ENCODE measurements at regions of chr21 and their contacts with region 1.

Region 1: DNA sequence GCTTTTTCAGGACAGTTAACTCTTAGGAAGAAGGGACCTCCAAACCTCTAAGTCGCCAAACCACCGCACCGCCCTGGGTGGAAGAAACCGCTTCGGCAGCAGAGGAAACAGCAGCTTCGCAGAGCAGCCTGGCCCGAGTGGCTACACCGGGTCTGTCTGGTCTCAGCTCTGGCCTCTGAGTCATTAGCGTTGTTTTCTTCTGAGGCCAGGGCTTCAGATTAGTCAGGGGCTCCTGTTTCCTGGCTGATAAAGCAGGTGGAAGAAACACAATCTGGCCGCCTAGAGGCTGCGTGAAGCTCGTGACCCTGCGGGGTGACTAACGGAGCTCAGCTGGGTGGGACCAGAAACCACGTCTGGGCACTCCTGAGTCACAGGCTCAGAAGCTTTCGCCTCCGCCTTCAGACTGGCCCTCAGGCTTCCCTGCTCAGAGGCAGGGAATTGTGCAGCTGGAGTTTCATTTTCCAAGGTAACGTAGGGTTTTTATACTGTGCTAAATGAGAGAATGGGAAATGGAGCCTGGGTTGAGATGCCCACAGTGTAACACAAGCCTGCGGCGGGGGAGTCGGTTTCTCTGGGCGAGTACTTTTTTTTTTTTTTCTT is 44.9 kb downstream of the CHAF1B start:
- DNase-seq: peak; percentile 66 to 93 (median 80)
- ATAC-seq: peak; percentile 88 to 95 (median 94)
- H3K4me3 ChIP-seq: peak overlapping the region in 11 of 12 donors; percentile 9 to 53 (median 35)
- H3K27ac ChIP-seq: peak overlapping the region; percentile 20 to 88 (median 74)
- H3K4me1 ChIP-seq: peaks cover 0 to 34% (median 5%) of the 10 kb centered on the region in 12 donors
- H3K27me3 ChIP-seq: peaks cover 0 to 6% (median 0%) of the 10 kb centered on the region in 9 donors
- CTCF ChIP-seq: peak in 3 of 12 donors; percentile 3 to 10 (median 8)
- POLR2A ChIP-seq: peak in 1 of 2 donors; percentile 71

Region 2: DNA sequence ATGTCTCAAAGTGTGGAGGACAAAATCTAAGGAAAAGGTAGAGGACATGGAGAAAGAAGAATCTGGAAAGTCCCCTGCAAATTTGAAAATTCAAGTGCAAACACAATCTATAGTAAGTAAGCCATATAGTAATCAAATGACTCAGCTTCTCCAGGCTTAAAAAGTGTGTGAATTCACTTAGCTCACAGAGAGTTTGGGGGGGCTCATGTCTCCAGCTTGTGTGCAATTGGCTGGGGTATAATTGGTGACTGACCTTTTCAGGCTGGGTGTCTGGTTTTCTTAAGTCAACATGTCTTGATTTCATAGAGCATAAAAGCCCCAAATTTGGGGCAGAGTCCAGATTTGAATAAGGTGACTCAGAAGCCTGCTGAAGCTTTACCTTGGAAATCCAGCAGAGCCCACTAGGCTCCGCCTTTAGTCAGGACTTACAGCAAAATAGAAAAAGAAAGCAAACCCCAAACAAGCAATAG is 41.2 kb after region 1 on chr21:
- intact Hi-C with region 1: loop called in 1 of 10 experiments (anchors 10 kb)
- DNase-seq: no peak
- ATAC-seq: no peak
- H3K4me3 ChIP-seq: no peak overlapping the region
- H3K27ac ChIP-seq: no peak overlapping the region
- H3K4me1 ChIP-seq: no peaks in the 10 kb centered on the region
- H3K27me3 ChIP-seq: no peaks in the 10 kb centered on the region
- CTCF ChIP-seq: no peak
- POLR2A ChIP-seq: no peak

Region 3: DNA sequence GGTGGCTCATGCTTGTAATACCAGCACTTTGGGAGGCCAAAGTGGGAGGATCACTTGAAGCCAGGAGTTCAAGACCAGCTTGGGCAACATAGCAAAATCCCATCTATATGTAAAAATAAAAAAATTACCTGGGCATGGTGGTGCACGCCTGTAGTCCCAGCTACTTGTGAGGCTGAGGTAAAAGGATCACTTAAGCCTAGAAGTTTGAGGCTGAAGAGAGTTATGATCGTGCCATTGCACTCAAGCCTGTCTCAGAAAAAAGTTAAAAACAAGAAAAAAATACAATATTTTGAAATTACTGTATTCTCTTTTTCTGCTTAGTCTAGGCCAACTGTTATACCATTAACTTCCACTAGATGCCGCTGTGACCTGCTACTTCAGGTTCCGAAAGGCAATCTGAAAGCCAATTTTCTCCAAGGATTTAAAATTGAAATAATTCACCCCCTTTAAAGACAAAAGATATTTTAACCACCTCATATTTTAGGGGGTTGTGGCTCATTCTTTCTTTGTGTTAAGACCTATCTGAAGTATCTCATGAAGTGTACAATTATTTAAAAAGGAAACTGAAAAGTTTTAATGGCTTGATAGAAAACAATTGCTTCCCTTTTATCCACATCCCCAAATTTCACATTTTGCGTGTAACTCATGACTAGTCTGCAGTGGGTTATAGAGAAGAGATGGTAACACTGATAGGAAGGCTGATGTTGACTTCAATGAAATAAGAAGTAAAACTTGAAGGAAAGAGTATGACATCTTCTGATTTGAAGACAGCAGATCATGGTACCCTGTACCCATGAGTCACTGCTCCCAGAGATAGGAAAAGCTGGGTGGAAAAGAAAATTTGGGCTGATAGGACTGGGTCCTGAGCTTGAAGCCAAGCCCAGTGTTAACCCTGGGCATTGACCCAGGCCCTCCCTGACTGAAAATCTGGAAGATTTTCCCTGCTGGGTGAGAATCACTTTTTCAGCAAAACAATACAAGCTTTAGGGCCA is 74.3 kb after region 1 on chr21:
- intact Hi-C with region 1: loop called in 1 of 10 experiments (anchors 5 kb)
- DNase-seq: peak in 1 of 5 donors; percentile 21
- ATAC-seq: no peak
- H3K4me3 ChIP-seq: no peak overlapping the region
- H3K27ac ChIP-seq: no peak overlapping the region
- H3K4me1 ChIP-seq: peaks cover 0 to 8% (median 0%) of the 10 kb centered on the region in 12 donors
- H3K27me3 ChIP-seq: peaks cover 0 to 8% (median 0%) of the 10 kb centered on the region in 9 donors
- CTCF ChIP-seq: peak; percentile 90 to 97 (median 92)
- POLR2A ChIP-seq: no peak

Region 4: DNA sequence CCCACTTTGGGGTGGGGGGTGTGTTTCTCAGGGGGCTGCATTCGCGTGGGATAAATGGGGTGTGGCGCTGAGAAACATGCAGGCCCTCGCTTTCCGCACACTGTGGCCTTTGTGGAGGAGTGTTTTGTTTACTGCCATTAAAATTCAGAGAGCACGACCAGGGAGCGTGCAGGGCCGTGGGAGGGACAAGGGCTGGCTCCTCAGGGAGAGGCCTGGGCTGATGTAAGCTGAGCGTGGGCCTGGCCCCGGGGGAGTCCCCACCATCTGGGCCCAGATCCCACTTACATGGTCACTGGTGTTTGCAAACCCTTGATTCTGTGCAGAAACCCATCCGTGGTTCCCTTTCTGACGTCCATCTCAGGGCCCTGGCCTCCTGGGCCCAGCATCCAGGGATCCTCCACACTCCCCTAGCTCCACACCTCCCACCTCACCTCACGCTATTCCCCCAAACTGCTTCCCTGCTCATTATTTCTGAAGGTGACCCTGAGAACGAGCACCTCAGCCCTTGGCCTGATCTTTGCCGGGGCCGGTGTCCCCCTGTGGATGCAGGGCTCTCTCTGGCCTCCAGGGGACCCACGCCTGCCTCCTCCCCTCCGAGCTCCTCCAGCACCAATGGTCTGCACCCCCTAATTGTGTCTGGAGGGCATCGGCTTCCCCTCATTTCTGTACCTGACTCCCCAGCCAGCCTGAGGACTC is 176.4 kb after region 1 on chr21:
- intact Hi-C with region 1: loop called in 1 of 10 experiments (anchors 10 kb)
- DNase-seq: no peak
- ATAC-seq: no peak
- H3K4me3 ChIP-seq: no peak overlapping the region
- H3K27ac ChIP-seq: no peak overlapping the region
- H3K4me1 ChIP-seq: no peaks in the 10 kb centered on the region
- H3K27me3 ChIP-seq: peaks cover 0 to 33% (median 0%) of the 10 kb centered on the region in 9 donors
- CTCF ChIP-seq: no peak
- POLR2A ChIP-seq: no peak